Testis (tissue), 5 donors: ENCODE measurements at regions of chr3 and their contacts with region 1.

Region 1: DNA sequence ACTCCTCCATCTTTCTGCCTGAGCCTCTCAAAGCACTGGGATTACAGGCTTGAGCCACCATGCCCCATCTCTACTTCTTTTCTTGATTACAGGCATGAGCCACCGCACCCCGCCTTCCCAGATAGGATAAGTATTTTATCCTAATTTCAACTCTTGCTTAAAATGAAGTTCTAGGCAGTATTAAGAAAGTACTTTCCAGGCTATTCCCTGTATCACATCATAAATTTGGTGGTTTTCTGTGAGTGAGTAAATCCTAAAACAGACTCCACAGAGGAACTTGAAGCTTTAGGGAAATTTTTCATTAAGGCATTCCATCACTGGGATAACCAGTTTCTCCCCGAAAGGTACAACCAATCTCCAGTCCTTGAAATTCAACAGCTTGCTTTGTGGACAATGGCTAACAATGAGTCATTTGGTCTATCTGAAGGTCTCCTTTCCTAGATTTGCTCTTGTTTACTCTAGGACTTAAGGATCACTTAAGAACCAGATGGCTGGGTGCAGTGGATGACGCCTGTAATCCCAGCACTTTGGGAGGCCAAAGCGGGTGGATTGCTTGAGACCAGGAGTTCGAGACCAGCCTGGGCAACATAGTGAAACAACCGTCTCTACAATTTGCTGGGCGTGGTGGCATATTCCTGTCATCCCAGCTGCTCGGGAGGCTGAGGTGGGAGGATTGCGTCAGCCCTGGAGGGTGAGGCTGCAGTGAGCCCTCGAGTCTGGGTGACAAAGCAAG is 49.7 kb upstream of the SKIL start:
- DNase-seq: no peak
- H3K4me3 ChIP-seq: no peak overlapping the region
- H3K27ac ChIP-seq: no peak overlapping the region
- H3K4me1 ChIP-seq: no peaks in the 10 kb centered on the region
- H3K27me3 ChIP-seq: no peaks in the 10 kb centered on the region
- CTCF ChIP-seq: no peak
- POLR2A ChIP-seq: no peak

Region 2: DNA sequence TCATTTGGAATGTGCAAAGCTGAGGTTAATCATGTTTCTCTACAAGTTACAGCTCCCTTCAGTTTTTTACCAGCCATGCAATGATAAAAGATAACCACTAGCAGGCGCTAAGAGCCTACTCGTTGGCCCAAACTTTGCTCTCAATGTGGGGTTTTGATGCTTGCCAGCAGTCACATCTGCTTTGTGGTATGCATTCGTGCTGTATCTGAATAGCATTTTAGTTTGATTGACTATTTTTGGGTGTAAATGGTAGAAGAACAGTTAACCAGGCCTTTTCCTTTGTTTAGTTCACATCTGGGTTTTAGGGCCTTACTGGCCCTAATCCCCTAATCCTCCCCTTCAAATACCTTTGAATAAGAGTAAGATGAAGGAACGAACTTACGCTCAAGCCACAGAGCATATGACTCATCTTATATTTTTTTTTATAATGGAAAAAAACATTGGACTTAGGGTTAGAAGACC is 106.4 kb after region 1 on chr3:
- intact Hi-C with region 1: loop called (anchors 5 kb)
- DNase-seq: peak; percentile 75
- H3K4me3 ChIP-seq: no peak overlapping the region
- H3K27ac ChIP-seq: no peak overlapping the region
- H3K4me1 ChIP-seq: peaks cover 4% of the 10 kb centered on the region
- H3K27me3 ChIP-seq: no peaks in the 10 kb centered on the region
- CTCF ChIP-seq: peak; percentile 83 to 93 (median 91)
- POLR2A ChIP-seq: no peak